Body of pancreas (tissue), 4 donors: ENCODE measurements at regions of chr2 and their contacts with region 1.

Region 1: GRCh38 chr2:207473049-207473930 is 56.5 kb upstream of the CREB1 start:
- DNase-seq: peak; percentile 16 to 42 (median 26)
- ATAC-seq: peak; percentile 48
- H3K4me3 ChIP-seq: no peak overlapping the region
- H3K27ac ChIP-seq: no peak overlapping the region
- H3K4me1 ChIP-seq: peaks cover 11% of the 10 kb centered on the region
- H3K27me3 ChIP-seq: no peaks in the 10 kb centered on the region
- CTCF ChIP-seq: peak in 6 of 7 experiments; percentile 5 to 39 (median 34)
- POLR2A ChIP-seq: no peak

Region 2: GRCh38 chr2:206700156-206700555 is 773.1 kb before region 1 on chr2:
- intact Hi-C with region 1: loop called (anchors 5 kb)
- DNase-seq: no peak
- ATAC-seq: no peak
- H3K4me3 ChIP-seq: no peak overlapping the region
- H3K27ac ChIP-seq: no peak overlapping the region
- H3K4me1 ChIP-seq: no peaks in the 10 kb centered on the region
- H3K27me3 ChIP-seq: no peaks in the 10 kb centered on the region
- CTCF ChIP-seq: no peak
- POLR2A ChIP-seq: no peak

Region 3: DNA sequence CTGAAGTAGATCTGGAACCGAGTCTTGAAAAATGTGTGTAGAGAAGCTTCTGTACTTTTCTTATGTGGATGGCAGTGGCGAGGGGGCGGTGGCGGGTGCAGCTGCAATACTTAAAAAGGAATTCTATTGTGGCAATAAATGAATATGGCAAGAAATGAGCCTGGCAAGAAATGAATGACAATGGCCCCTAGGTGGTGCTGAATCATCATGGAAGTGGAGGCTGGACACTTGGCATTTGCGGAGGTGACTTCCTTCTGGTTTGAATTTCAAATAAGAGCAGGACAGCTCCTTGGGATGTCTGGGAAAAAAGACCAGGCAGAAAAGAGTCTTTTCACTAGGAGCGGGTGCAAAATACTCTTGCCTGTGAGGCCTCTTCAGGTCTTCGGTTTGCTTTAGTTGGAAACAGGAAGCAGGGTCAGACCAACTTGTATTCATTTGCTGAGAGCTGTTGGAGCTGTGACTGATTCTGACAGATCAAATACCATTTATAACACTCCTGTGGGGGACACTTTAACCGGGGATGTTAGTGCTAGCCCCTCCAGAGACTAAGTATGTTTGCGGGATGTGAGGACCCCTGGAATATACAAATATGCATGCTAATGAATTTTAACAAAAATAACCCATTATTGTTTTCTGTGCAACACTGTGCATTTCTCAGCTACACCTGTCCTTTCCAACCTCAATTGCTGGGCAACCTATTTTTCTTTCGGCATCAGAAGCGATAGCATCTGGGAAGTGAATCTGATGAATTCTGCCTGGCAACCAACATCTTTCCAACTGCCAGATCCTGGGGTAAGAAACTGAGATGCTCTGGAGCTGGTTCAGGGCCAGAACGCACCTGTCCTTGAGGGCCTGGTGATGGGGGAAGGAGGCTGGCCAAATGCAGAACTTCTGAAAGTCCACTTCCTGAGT is 672.5 kb before region 1 on chr2:
- intact Hi-C with region 1: loop called (anchors 5 kb)
- DNase-seq: peak; percentile 45 to 66 (median 54)
- ATAC-seq: peak; percentile 56
- H3K4me3 ChIP-seq: no peak overlapping the region
- H3K27ac ChIP-seq: no peak overlapping the region
- H3K4me1 ChIP-seq: peaks cover 5% of the 10 kb centered on the region
- H3K27me3 ChIP-seq: no peaks in the 10 kb centered on the region
- CTCF ChIP-seq: peak; percentile 31 to 76 (median 67)
- POLR2A ChIP-seq: no peak

Region 4: DNA sequence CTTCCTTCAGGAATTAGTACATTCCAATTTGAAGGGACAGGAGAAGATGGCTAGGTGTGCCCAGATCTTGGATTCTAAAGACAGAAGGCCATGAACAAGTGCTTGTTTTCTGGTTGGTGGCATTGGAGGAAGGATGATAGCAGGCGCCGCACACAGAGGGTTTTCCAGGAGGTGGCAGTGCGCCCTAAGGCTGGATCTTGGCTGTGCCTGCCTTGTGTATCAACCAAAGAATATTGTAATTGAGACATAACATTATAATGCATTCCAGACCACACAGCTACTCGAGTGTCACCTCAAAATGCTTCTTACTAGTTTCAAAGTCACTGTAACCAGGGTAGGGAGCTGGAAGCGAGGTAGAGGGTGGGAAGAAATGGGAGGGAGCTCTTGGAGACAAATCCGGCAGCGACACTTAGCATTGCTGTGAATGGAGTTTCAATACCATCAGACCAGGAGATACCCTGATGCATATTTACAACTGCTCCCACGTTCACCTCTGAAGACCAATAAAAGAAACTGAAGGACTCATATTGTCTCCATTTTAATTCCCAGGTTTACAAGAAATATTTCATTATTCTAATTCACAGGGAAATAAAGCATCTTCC is 491.4 kb before region 1 on chr2:
- intact Hi-C with region 1: loop called (anchors 5 kb)
- DNase-seq: peak; percentile 38 to 56 (median 48)
- ATAC-seq: no peak
- H3K4me3 ChIP-seq: no peak overlapping the region
- H3K27ac ChIP-seq: no peak overlapping the region
- H3K4me1 ChIP-seq: no peaks in the 10 kb centered on the region
- H3K27me3 ChIP-seq: no peaks in the 10 kb centered on the region
- CTCF ChIP-seq: peak in 6 of 7 experiments; percentile 27 to 56 (median 44)
- POLR2A ChIP-seq: no peak

Region 5: GRCh38 chr2:207115715-207116364 is 357.4 kb before region 1 on chr2:
- intact Hi-C with region 1: no loop called
- DNase-seq: no peak
- ATAC-seq: no peak
- H3K4me3 ChIP-seq: no peak overlapping the region
- H3K27ac ChIP-seq: no peak overlapping the region
- H3K4me1 ChIP-seq: no peaks in the 10 kb centered on the region
- H3K27me3 ChIP-seq: no peaks in the 10 kb centered on the region
- CTCF ChIP-seq: no peak
- POLR2A ChIP-seq: no peak

Region 6: GRCh38 chr2:207423886-207424285 is 49.4 kb before region 1 on chr2:
- intact Hi-C with region 1: no loop called
- DNase-seq: no peak
- ATAC-seq: no peak
- H3K4me3 ChIP-seq: no peak overlapping the region
- H3K27ac ChIP-seq: no peak overlapping the region
- H3K4me1 ChIP-seq: no peaks in the 10 kb centered on the region
- H3K27me3 ChIP-seq: no peaks in the 10 kb centered on the region
- CTCF ChIP-seq: no peak
- POLR2A ChIP-seq: no peak